Activated CD8-positive, alpha-beta T cell treated with anti-CD3 and anti-CD28 coated beads, Interleukin-2, amount 10 ng/mL, durations not matched to agents 7 days and 5 days (primary cell): ENCODE measurements at regions of chrX and their contacts with region 1.

Region 1: GRCh38 chrX:69618803-69619202 is 2.9 kb downstream of the EDA start:
- DNase-seq: peak; percentile 20
- ATAC-seq: no peak
- H3K4me3 Mint-ChIP-seq: no peak overlapping the region
- H3K27ac Mint-ChIP-seq: no peak overlapping the region
- H3K4me1 Mint-ChIP-seq: no peaks in the 10 kb centered on the region
- H3K27me3 Mint-ChIP-seq: peaks cover 14% of the 10 kb centered on the region

Region 2: GRCh38 chrX:69285881-69286564 is 332.8 kb before region 1 on chrX:
- CTCF ChIA-PET with region 1: no interaction called
- POLR2A ChIA-PET with region 1: no interaction called
- DNase-seq: peak; percentile 59
- ATAC-seq: peak; percentile 71
- H3K4me3 Mint-ChIP-seq: peak overlapping the region; percentile 34
- H3K27ac Mint-ChIP-seq: no peak overlapping the region
- H3K4me1 Mint-ChIP-seq: no peaks in the 10 kb centered on the region
- H3K27me3 Mint-ChIP-seq: no peaks in the 10 kb centered on the region

Region 3: DNA sequence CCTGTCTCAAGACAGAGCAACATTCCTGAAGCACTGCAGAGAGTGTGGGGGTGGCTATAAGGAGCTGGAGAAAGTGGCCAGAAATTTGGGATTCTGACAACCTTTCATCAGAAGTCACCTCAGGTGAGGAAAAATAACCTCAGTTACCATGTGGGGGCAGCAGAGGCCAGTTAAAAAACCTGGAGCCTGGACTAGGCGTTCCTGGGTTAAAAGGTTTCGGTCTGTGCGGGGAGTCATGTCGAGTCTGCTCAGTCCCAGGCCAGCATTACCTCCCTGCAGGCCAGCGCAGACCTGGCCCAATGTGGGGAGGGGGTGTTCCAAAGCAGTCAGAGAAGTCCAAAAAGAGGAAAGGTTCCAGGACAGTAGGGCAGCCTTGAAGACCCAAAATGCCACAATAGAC is 125.6 kb before region 1 on chrX:
- CTCF ChIA-PET with region 1: no interaction called
- POLR2A ChIA-PET with region 1: no interaction called
- DNase-seq: peak; percentile 33
- ATAC-seq: no peak
- H3K4me3 Mint-ChIP-seq: no peak overlapping the region
- H3K27ac Mint-ChIP-seq: no peak overlapping the region
- H3K4me1 Mint-ChIP-seq: no peaks in the 10 kb centered on the region
- H3K27me3 Mint-ChIP-seq: peaks cover 3% of the 10 kb centered on the region

Region 4: DNA sequence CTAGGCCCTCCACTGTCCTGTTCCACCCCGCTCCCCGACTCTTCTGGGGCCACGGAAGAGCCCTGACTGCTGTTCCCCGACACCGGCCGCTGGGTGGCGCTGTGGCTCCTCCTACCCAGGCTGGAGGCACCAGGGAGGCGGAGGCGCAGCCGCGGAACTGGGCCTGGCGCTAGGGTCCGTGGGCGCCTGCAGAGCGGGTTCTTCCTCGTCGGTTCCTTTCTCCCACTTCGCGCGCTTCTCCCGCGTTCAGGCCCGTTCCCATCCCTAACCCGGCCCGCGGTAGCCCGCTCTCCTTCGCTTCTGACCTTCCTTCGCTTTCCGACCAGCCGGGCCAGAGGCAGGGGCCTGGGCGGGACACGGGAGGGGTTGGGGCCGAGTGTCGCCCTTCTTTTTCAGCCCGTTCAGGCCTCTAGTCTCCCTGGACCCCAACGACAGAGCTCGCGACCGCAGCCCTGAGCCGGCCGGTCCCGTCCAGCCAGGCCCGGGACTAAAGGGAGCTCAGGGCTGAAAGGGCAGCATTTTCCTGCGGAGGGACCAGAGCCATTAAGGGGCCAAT is 80.4 kb before region 1 on chrX:
- CTCF ChIA-PET with region 1: interaction called, 15 read pairs
- POLR2A ChIA-PET with region 1: no interaction called
- DNase-seq: peak; percentile 72
- ATAC-seq: peak; percentile 92
- H3K4me3 Mint-ChIP-seq: peak overlapping the region; percentile 22
- H3K27ac Mint-ChIP-seq: no peak overlapping the region
- H3K4me1 Mint-ChIP-seq: peaks cover 14% of the 10 kb centered on the region
- H3K27me3 Mint-ChIP-seq: peaks cover 2% of the 10 kb centered on the region